Sciatic nerve (tissue), 2 donors: ENCODE measurements at regions of chr7 and their contacts with region 1.

Region 1: GRCh38 chr7:28433699-28434219 is 21.4 kb downstream of the CREB5 start:
- DNase-seq: peak; percentile 64
- ATAC-seq: peak; percentile 43

Region 2: GRCh38 chr7:29416938-29417305 is 983.2 kb after region 1 on chr7:
- intact Hi-C with region 1: loop called (anchors 5 kb)
- DNase-seq: no peak
- ATAC-seq: no peak